Adrenal gland (tissue), 19 donors: ENCODE measurements at regions of chr6 and their contacts with region 1.

Region 1: GRCh38 chr6:42907336-42907735 is 8.5 kb upstream of the PTCRA start:
- DNase-seq: no peak
- H3K4me3 ChIP-seq: no peak overlapping the region
- H3K27ac ChIP-seq: no peak overlapping the region
- H3K4me1 ChIP-seq: peaks cover 6 to 7% of the 10 kb centered on the region in 2 donors
- H3K27me3 ChIP-seq: no peaks in the 10 kb centered on the region
- CTCF ChIP-seq: no peak
- POLR2A ChIP-seq: no peak

Region 2: GRCh38 chr6:43113431-43114260 is 206.3 kb after region 1 on chr6:
- intact Hi-C with region 1: no loop called
- DNase-seq: no peak
- H3K4me3 ChIP-seq: no peak overlapping the region
- H3K27ac ChIP-seq: peak overlapping the region in 1 of 5 donors; percentile 45
- H3K4me1 ChIP-seq: peaks cover 0 to 10% of the 10 kb centered on the region in 2 donors
- H3K27me3 ChIP-seq: no peaks in the 10 kb centered on the region
- CTCF ChIP-seq: no peak
- POLR2A ChIP-seq: no peak

Region 3: DNA sequence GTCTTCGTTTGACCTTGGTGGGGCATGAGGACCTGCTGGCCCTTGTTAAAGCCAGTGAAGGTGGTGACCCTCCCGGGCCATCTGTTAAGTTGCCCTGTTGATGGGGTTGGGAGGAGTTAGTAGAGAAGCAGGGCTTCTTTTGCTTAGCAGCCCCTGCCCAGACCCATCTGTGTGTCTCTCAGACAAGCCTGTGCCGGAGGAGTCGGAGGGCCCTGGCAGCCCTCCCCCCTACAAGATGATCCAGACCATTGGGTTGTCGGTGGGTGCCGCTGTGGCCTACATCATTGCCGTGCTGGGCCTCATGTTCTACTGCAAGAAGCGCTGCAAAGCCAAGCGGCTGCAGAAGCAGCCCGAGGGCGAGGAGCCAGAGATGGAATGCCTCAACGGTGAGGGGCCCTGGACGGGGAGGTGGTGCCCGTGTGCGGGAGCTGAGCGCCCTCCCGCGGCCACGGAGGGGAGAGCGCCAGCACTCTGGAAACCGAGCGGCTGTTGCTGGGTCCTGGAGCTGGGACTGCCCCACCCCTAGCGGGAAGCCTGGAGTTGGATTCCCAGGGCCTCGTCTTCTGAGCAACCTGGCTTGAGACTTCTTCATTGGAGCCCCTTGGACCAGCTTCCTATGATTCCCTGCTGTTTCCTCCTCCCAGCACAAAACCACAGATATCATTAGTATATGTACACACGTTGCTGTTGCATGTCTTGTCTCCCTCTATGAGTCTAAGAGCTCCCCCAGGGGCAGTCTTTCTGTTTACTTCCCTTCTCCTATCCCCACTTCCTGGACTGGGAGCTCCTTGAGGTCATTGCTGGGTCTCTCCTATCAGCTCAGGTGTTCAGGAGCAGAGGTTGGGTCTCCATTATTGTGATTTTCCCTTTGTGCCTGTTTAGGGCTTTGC is 236.1 kb after region 1 on chr6:
- intact Hi-C with region 1: loop called (anchors 5 kb)
- DNase-seq: peak; percentile 85 to 94 (median 89)
- H3K4me3 ChIP-seq: no peak overlapping the region
- H3K27ac ChIP-seq: no peak overlapping the region
- H3K4me1 ChIP-seq: peaks cover 0 to 6% of the 10 kb centered on the region in 2 donors
- H3K27me3 ChIP-seq: no peaks in the 10 kb centered on the region
- CTCF ChIP-seq: peak; percentile 88 to 99 (median 96)
- POLR2A ChIP-seq: no peak

Region 4: DNA sequence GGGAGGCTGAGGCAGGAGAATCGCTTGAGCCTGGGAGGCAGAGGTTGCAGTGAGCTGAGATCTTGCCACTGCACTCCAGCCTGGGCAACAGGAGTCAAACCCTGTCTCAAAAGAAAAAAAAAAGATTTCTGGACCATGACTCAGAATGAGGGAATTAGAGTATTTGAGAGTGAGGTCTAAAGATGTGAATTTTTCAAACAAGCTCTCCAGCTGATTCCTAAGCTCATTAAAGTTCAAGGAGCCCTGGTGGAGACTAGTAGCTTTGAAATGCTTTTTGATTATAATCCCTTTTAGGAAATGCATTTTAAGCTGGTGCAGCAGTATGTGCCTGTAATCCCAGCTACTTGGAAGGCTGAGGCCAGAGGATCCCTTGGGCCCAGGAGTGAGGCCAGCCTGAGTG is 241.9 kb after region 1 on chr6:
- intact Hi-C with region 1: loop called (anchors 5 kb)
- DNase-seq: no peak
- H3K4me3 ChIP-seq: no peak overlapping the region
- H3K27ac ChIP-seq: no peak overlapping the region
- H3K4me1 ChIP-seq: no peaks in the 10 kb centered on the region
- H3K27me3 ChIP-seq: no peaks in the 10 kb centered on the region
- CTCF ChIP-seq: no peak
- POLR2A ChIP-seq: no peak